PC-9 (cell line): ENCODE measurements at regions of chr1 and their contacts with region 1.

Region 1: GRCh38 chr1:37474046-37474759 is at the start of gene ZC3H12A:
- DNase-seq: peak; percentile 76 to 96
- H3K4me3 ChIP-seq: peak within 1 kb of the TSS; percentile 94
- H3K27ac ChIP-seq: peak within 1 kb of the TSS; percentile 96
- H3K4me1 ChIP-seq: peaks cover 57% of the 10 kb centered on the region
- H3K27me3 ChIP-seq: no peaks in the 10 kb centered on the region
- CTCF ChIP-seq: no peak
- total RNA-seq, gene ZC3H12A: 18.7 and 18.9 TPM in 2 replicates

Region 2: DNA sequence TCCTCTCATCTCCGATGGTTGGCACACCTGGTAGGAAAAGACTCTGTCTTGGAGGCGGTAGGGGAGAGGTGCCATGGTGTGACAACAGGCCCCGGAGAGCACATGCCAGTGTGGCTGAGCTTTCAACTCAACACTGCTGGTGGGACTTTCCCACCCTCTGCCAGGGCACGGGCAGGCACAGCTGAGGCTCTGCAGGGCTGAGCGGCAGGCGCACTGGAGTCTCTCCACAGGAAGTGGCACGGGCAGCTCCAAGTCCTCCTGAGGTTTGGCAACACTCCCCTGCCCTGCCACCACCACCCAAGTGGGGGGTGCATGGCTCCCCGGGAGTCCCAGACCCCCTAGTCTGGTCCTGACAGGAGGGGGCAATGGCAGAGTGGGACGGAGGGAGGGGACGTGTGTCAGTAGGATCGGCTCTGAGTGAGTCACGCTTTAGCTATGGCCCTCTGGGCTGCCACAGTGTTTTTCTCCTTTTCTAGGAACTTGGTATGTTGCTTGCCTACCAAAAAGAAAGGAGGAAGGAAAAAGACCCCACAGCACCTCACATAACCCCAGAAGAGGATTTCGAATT is 1123.5 kb before region 1 on chr1:
- CTCF ChIA-PET with region 1: no interaction called
- POLR2A ChIA-PET with region 1: interaction called, 31 read pairs
- intact Hi-C with region 1: loop called (anchors 2 kb)
- DNase-seq: peak; percentile 89 to 91
- H3K4me3 ChIP-seq: peak overlapping the region; percentile 41; the same call in 1 of the 2 replicates
- H3K27ac ChIP-seq: peak overlapping the region; percentile 97
- H3K4me1 ChIP-seq: peaks cover 67% of the 10 kb centered on the region
- H3K27me3 ChIP-seq: no peaks in the 10 kb centered on the region
- CTCF ChIP-seq: no peak

Region 3: DNA sequence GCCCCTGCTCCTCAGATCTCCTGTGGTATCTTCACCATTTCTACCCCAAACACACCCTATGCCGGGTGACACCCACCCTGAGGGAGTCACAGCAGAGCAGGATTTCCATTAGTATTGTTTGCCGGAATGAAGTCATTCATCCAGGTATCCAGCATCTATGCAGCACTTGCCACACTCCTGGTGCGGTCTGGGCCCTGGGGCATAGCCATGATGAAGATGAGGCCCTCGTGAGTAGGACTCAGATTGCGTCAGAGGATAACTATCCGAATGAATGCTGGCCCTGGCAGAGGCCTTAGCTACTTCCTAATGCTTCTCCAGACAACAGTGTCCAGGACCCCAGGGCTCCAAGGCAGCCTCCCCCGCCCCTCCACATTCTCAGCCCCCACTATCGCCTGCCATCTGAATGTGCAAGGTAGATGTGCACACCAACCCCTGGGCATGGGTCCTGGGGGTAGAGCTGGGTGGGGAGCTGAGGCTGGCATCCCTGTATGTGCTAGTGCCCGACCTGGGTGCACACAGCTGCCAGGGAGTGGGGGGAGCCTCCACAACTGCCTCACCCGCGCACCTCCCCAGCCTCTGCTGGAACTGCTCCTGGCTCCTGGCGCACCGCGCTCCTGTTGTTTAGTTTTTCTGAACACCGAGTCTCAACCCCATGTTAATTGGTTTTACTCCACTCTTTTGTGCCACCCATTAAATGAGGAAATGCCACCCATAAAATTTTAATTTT is 25.3 kb before region 1 on chr1:
- CTCF ChIA-PET with region 1: no interaction called
- POLR2A ChIA-PET with region 1: no interaction called
- intact Hi-C with region 1: no loop called
- DNase-seq: peak; percentile 60 to 79
- H3K4me3 ChIP-seq: no peak overlapping the region
- H3K27ac ChIP-seq: no peak overlapping the region
- H3K4me1 ChIP-seq: peaks cover 17% of the 10 kb centered on the region
- H3K27me3 ChIP-seq: no peaks in the 10 kb centered on the region
- CTCF ChIP-seq: no peak

Region 4: DNA sequence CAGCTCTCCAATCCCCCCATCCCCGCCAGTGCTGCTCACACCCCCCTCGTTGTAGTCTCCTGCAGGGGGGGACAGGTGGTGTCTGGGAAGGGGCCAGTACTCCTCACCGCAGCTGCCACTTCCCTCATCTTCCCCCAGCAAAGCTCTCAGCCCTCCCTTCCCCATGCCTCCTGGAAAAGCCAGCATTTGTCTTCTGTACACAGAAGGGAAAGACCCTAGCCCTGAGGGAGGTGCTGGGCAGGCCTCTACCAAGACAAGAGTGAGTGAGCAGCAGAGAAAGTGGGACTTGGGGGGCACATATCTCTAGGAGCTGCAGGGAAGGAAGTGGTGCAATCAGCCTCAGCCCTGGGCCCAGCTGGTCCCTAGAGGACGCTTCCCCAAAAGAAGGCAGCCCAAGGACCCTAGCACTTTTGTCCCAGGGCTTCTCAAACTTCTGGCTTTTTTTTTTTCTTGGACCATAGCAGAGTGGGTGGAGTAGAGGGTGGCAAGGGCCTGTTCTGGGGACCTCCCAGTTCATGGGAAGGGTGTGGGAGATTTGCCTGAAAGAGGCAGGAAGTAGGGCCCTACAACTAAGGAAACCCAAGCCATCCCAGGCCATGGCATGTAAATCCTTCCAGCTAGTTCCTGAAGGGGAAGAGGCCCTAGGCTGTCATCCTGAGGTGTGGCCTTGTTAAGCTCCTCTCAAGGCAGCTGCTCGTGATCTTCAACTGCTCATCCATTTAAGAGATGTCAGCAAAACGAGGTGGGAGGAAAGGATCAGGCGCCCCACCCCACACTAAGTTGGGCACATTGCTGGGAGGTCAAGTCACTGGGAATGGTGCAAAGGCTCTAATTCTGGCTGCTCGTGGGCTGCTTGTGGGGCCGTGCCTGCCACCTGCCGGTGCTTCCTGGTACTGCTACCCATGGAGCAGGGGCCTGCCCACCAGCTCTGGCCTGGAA is 12.7 kb after region 1 on chr1:
- CTCF ChIA-PET with region 1: interaction called, 14 read pairs
- POLR2A ChIA-PET with region 1: interaction called, 13 read pairs
- intact Hi-C with region 1: loop called (anchors 1 kb)
- DNase-seq: peak; percentile 53 to 84
- H3K4me3 ChIP-seq: no peak overlapping the region
- H3K27ac ChIP-seq: no peak overlapping the region
- H3K4me1 ChIP-seq: peaks cover 42% of the 10 kb centered on the region
- H3K27me3 ChIP-seq: no peaks in the 10 kb centered on the region
- CTCF ChIP-seq: peak; percentile 100

Region 5: GRCh38 chr1:37807555-37808368 is 333.6 kb after region 1 on chr1 and contains the starts of genes C1orf122 and YRDC:
- CTCF ChIA-PET with region 1: no interaction called
- POLR2A ChIA-PET with region 1: no interaction called
- intact Hi-C with region 1: loop called (anchors 5 kb)
- DNase-seq: peak; percentile 86 to 95
- H3K4me3 ChIP-seq: peak within 1 kb of the TSS; percentile 71
- H3K27ac ChIP-seq: peak within 1 kb of the TSS; percentile 63
- H3K4me1 ChIP-seq: peaks cover 20% of the 10 kb centered on the region
- H3K27me3 ChIP-seq: no peaks in the 10 kb centered on the region
- CTCF ChIP-seq: no peak
- total RNA-seq, gene C1orf122: 51.8 and 75.8 TPM in 2 replicates
- total RNA-seq, gene YRDC: 13.2 and 16.0 TPM in 2 replicates

Region 6: DNA sequence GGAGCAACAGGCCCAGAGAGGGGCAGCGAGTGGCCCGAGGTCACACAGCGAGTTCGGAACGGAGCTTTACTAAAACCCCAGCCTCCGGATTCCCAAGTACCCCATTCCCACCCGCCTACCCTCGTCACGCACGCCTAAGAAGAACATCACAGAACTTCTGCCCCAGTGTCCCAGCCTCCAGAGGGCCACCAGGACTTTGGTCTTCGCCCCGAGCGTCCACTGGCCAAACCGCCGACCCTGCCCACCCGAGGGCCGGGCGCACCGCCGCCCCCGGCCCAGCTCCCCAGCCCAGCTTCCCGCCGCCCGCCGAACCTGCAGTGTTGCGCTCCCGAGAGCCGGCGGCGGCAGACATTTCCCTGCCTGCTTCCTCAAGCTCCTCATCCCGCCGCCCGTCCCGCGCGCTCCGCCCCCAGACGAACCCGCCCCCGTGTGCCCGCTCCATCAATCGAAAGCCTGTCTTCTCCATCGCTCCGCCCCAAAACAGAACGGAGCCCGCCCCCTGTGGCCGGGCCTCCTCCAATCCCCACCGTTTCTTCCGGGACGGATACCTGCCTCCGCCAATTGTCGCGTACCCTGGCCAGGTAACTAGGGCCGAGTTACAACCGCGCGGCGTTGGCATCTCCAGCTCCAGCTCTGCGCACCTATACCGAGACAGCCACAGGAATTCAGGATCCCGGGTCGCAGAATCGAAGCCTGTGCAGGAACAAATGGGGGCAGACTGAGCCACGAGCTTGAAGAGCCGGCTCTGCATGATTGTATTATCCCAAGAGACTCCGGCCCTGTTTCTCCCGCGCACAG is 457.4 kb after region 1 on chr1:
- CTCF ChIA-PET with region 1: no interaction called
- POLR2A ChIA-PET with region 1: no interaction called
- intact Hi-C with region 1: loop called (anchors 2 kb)
- DNase-seq: peak; percentile 96 to 100
- H3K4me3 ChIP-seq: peak overlapping the region; percentile 78
- H3K27ac ChIP-seq: peak overlapping the region; percentile 28; the same call in 1 of the 2 replicates
- H3K4me1 ChIP-seq: peaks cover 38% of the 10 kb centered on the region
- H3K27me3 ChIP-seq: no peaks in the 10 kb centered on the region
- CTCF ChIP-seq: no peak